AG04449 (cell line): ENCODE measurements at regions of chr1 and their contacts with region 1.

Region 1: GRCh38 chr1:230642263-230642959 is at the start of gene COG2:
- DNase-seq: peak; percentile 26
- H3K4me3 ChIP-seq: peak within 1 kb of the TSS; percentile 97
- CTCF ChIP-seq: peak; percentile 100

Region 2: DNA sequence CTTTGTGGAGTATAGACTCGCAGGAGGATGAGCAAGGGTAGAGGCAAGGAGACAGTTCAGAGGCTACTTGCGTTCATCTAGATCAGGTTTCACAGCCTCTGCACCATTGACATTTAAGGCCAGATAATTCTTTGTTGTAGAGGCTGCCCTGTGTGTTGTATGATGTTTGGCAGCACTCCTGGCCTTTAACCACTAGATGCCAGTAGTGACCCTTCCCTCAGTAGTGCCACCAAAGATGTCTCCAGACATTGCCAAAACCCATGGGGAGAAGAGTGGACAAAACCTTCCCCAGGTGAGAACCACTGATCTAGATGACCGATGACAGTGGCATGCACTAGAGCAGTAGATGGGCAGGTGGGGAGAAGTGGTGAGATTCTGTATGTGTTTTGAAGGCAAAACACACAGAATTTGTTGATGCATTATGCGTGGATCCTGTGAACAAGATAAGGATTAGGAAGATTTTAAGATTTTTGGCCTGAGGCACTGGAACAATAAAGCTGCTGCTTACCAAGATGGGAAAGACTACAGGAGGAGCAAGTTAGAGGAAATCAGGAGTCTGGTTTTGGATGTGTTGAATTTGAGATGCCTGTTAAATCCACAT is 10.0 kb before region 1 on chr1:
- CTCF ChIA-PET with region 1: interaction called, 12 read pairs
- POLR2A ChIA-PET with region 1: no interaction called
- DNase-seq: no peak
- H3K4me3 ChIP-seq: no peak overlapping the region
- CTCF ChIP-seq: peak; percentile 57

Region 3: GRCh38 chr1:230661976-230662375 is 19.6 kb after region 1 on chr1:
- CTCF ChIA-PET with region 1: interaction called, 24 read pairs
- POLR2A ChIA-PET with region 1: no interaction called
- DNase-seq: no peak
- H3K4me3 ChIP-seq: no peak overlapping the region
- CTCF ChIP-seq: no peak

Region 4: GRCh38 chr1:230772457-230773395 is 130.3 kb after region 1 on chr1:
- CTCF ChIA-PET with region 1: interaction called, 60 read pairs
- POLR2A ChIA-PET with region 1: interaction called, 4 read pairs
- DNase-seq: peak; percentile 26
- H3K4me3 ChIP-seq: no peak overlapping the region
- CTCF ChIP-seq: peak; percentile 79

Region 5: DNA sequence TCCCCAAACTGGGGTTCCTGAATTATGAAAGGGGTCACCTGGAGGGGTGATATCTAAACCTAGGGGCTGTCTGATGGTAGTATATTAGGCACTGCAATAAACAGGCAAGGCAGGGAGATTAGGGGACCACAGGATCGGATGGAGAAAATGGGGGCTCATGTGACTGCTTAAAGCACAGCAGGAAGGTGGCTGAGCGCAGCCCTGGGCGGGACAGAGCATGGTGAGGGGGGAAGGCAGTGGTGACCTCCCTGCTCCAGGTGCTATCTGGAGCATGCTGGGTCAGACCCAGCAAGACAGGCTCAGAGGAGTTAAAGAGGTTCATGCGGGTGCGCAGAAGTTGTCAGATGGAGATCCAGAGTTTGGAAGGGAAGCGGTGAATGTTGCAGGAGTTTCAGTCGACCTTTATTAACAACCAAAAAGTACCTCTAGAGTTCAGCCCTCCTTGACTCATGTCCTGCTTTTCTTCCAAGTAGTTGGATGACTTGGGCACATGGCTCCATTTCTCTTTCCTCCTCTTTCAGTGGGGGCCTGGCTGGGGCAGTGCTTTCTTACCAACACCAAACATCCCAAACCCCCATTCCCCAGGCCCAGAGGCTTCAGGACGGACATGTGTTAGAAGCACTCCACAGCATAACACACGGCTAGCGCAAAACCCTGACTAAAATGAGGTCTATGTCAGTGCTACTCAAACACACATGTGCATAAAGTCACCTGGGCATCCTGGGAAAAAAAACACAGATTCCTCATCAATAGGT is 146.3 kb after region 1 on chr1:
- CTCF ChIA-PET with region 1: interaction called, 11 read pairs
- POLR2A ChIA-PET with region 1: no interaction called
- DNase-seq: no peak
- H3K4me3 ChIP-seq: no peak overlapping the region
- CTCF ChIP-seq: no peak